Dendritic cell treated with granulocyte-macrophage colony-stimulating factor and Interleukin-4, amounts not matched to agents 40 ng/mL and 50 ng/mL, for 4 days (primary cell): ENCODE measurements at regions of chr14 and their contacts with region 1.

Region 1: GRCh38 chr14:21213652-21214051 is 55.6 kb downstream of the HNRNPC start:
- H3K4me3 Mint-ChIP-seq: no peak overlapping the region
- H3K27ac Mint-ChIP-seq: no peak overlapping the region
- H3K4me1 Mint-ChIP-seq: peaks cover 16% of the 10 kb centered on the region
- H3K27me3 Mint-ChIP-seq: no peaks in the 10 kb centered on the region

Region 2: DNA sequence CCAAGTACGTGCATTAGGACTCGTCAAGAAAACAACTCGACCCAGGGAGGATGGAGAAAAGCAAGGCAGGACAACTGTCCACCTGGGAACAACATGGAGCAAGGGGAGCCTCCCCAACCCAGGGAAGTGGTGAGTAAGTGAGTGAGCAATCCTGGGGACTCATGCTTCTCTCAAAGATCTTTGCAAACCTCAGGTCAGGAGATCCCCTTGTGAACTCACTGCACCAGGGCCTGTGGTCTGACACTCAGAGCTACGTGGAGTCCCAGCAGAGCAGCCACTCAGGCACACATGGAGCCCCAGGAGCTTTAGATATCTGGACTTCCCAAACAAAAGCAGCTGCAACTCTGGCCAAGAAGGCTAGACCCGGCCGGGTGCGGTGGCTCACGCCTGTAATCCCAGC is 45.6 kb before region 1 on chr14:
- intact Hi-C with region 1: no loop called
- H3K4me3 Mint-ChIP-seq: no peak overlapping the region
- H3K27ac Mint-ChIP-seq: no peak overlapping the region
- H3K4me1 Mint-ChIP-seq: peaks cover 5% of the 10 kb centered on the region
- H3K27me3 Mint-ChIP-seq: peaks cover 13% of the 10 kb centered on the region

Region 3: DNA sequence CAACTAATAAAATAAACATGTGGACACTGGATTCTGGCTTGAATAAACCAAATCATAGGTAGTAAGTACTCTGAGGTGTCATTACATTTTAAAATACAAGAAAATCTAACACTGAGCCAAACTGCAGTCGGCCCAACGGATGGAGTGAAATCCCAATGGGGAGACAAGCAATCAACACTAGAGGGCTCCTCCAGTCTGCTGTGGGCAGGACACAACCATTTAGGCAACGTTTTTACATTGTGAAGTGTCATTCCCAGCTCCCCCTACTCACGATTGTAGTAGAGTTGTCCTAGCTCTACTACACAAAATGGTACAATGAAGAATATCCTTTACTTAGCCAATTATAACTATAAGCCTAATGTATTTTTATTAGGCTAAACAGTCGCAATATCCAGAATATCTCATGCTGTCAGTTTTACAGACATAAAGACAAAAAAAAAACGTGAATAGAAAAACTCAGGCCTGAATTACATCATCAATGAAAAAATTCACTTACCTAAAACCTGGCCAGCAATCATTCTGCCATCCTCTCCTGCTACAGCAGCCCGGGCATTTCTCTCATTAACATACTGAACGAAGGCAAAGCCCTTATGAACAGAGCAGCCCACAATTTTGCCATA is 19.9 kb after region 1 on chr14:
- intact Hi-C with region 1: loop called (anchors 2 kb)
- H3K4me3 Mint-ChIP-seq: no peak overlapping the region
- H3K27ac Mint-ChIP-seq: no peak overlapping the region
- H3K4me1 Mint-ChIP-seq: peaks cover 29% of the 10 kb centered on the region
- H3K27me3 Mint-ChIP-seq: no peaks in the 10 kb centered on the region

Region 4: GRCh38 chr14:21317398-21317797 is 103.7 kb after region 1 on chr14:
- intact Hi-C with region 1: no loop called
- H3K4me3 Mint-ChIP-seq: no peak overlapping the region
- H3K27ac Mint-ChIP-seq: peak overlapping the region; percentile 65
- H3K4me1 Mint-ChIP-seq: peaks cover 60% of the 10 kb centered on the region
- H3K27me3 Mint-ChIP-seq: peaks cover under 1% of the 10 kb centered on the region

Region 5: DNA sequence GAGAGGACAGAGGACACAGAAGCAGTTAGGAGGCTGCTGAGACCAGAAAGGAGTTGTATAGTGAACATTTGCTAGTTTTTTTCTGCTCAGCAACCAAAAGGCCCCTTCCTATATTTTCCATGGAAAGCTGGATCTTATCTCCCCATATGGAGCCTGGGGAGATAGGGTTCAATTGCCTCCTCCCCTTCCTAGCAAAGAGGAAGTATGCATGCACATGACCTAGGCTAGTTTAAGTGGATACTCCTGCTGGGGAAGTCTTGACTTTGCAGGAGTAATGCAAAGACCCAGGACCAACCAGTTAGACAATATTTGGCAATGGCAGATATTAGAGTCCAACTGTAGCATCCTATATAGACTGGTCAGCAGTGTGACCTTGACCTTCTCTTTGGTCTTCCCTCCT is 227.2 kb after region 1 on chr14:
- intact Hi-C with region 1: no loop called
- H3K4me3 Mint-ChIP-seq: no peak overlapping the region
- H3K27ac Mint-ChIP-seq: peak overlapping the region; percentile 75
- H3K4me1 Mint-ChIP-seq: peaks cover 50% of the 10 kb centered on the region
- H3K27me3 Mint-ChIP-seq: no peaks in the 10 kb centered on the region